ENCODE measurements at regions of chr11 and their contacts with region 1.

Region 1: GRCh38 chr11:9460322-9461067 is at the start of gene ZNF143:
- DNase-seq: peak; percentile 99 to 100 (median 100)
- ATAC-seq: peak; percentile 89
- H3K4me3 ChIP-seq: peak within 1 kb of the TSS; percentile 89 to 93
- H3K4me3 Mint-ChIP-seq: peak within 1 kb of the TSS; percentile 92
- H3K27ac ChIP-seq: peak within 1 kb of the TSS; percentile 98
- H3K27ac Mint-ChIP-seq: peak within 1 kb of the TSS; percentile 97
- H3K4me1 ChIP-seq: peaks cover 31% of the 10 kb centered on the region
- H3K4me1 Mint-ChIP-seq: peaks cover 33% of the 10 kb centered on the region
- H3K27me3 ChIP-seq: no peaks in the 10 kb centered on the region
- H3K27me3 Mint-ChIP-seq: no peaks in the 10 kb centered on the region
- CTCF ChIP-seq: no peak
- total RNA-seq, gene ZNF143: 13.4 to 15.4 TPM

Region 2: DNA sequence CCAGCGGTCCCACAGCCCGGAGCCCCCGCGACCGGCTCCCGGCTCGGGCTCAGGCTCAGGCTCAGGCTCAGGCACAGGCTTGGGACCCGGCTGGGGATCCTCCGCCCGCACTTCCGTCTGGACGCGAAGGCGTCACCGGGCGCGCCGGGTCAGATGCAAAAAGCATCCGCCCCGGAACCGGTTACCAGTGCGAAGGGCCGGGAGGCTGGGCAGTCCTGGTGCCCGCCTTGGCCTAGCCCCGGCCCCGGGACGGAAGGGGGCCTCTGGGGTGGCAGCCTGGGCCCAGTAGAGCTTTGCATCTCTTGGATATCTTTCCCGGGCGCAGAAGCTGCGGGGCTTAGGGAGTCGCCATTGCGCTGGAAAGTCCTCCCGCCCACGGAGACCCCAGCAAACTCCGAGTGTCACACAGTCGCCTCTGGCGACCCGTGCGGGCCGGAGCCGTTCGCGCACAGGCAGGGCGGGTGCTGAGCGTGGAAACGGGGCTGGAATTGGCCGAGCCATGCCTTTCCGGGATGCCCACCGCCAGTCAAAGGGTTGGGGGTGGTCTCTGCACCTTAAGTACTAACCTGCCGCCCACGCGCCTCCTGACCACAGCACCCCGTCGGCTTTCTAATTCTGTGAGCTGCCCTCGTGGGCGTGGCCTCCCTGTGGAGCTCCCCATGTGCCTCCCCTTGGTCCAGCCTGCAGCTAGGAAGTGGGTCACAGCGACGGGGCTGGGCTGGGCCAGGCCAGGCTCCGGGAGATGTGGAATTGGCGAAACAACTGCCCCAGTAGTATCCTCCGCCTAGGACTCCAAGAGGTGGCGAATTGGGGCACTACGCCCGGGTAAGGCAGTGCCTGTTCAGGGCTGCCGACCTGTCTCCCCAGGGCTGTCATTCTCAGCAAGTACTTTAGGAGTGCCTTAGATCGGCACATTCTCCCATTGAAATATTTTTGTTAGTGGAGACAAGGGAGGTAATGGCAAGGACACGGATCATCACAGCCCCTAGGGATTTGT is 495.9 kb before region 1 on chr11 and contains the start of gene TMEM9B:
- CTCF ChIA-PET with region 1: no interaction called
- POLR2A ChIA-PET with region 1: interaction called, 10 read pairs
- intact Hi-C with region 1: loop called in 1 of 2 experiments (anchors 1 kb)
- DNase-seq: peak; percentile 48 to 89 (median 75)
- ATAC-seq: peak; percentile 72
- H3K4me3 ChIP-seq: peak within 1 kb of the TSS; percentile 93 to 98
- H3K4me3 Mint-ChIP-seq: peak within 1 kb of the TSS; percentile 98
- H3K27ac ChIP-seq: peak within 1 kb of the TSS; percentile 94 to 99
- H3K27ac Mint-ChIP-seq: peak within 1 kb of the TSS; percentile 98
- H3K4me1 ChIP-seq: peaks cover 24% of the 10 kb centered on the region
- H3K4me1 Mint-ChIP-seq: peaks cover 36% of the 10 kb centered on the region
- H3K27me3 ChIP-seq: no peaks in the 10 kb centered on the region
- H3K27me3 Mint-ChIP-seq: no peaks in the 10 kb centered on the region
- CTCF ChIP-seq: no peak
- total RNA-seq, gene TMEM9B: 27.5 to 28.5 TPM

Region 3: GRCh38 chr11:9265211-9266131 is 195.0 kb before region 1 on chr11 and contains the start of gene DENND5A:
- CTCF ChIA-PET with region 1: no interaction called
- POLR2A ChIA-PET with region 1: interaction called, 14 read pairs
- intact Hi-C with region 1: no loop called
- DNase-seq: peak; percentile 12 to 74 (median 52)
- ATAC-seq: peak; percentile 44
- H3K4me3 ChIP-seq: peak within 1 kb of the TSS; percentile 71 to 79
- H3K4me3 Mint-ChIP-seq: peak within 1 kb of the TSS; percentile 98
- H3K27ac ChIP-seq: peak within 1 kb of the TSS; percentile 45 to 71
- H3K27ac Mint-ChIP-seq: peak within 1 kb of the TSS; percentile 97
- H3K4me1 ChIP-seq: peaks cover 23% of the 10 kb centered on the region
- H3K4me1 Mint-ChIP-seq: peaks cover 35% of the 10 kb centered on the region
- H3K27me3 ChIP-seq: no peaks in the 10 kb centered on the region
- H3K27me3 Mint-ChIP-seq: no peaks in the 10 kb centered on the region
- CTCF ChIP-seq: no peak
- total RNA-seq, gene DENND5A: 78.8 to 81.7 TPM

Region 4: DNA sequence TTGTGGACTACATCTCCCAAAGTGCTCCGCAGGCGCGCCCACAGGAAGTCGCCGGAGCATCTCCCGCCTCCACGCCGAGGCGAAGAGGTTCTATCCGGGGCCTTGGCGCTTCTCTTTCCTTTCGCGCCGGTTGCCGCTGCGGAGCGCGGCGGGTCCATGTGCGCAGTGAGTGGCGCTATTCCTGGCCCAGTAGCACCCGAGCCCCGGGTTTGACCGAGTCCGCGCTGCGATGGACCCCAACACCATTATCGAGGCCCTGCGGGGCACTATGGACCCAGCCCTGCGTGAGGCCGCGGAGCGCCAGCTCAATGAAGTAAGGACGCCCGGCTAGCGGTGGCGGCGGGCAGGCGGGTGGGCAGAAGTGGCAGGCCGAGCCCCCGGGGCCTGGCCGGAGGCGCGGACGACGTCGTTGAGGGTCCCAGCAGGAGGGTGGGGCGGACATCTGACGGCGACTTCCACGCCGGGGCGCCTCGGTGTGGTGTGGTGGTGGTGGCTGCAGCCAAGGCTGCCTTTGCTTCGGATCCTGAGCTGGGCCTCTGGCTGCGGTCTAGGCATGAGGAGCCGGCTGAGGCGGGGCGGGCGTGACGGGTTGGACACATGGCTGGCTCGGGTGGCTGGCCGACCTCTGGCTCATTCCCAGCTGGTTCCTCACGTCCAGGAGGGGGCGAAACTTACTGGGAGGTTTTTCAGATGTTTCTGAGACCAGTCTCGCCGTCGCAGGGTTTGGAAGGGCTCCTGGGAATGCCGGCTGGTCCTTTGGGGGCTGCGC is 75.8 kb before region 1 on chr11 and contains the start of gene IPO7:
- CTCF ChIA-PET with region 1: no interaction called
- POLR2A ChIA-PET with region 1: interaction called, 34 read pairs
- intact Hi-C with region 1: loop called (anchors 1 kb)
- DNase-seq: peak; percentile 73 to 92 (median 87)
- ATAC-seq: peak; percentile 98
- H3K4me3 ChIP-seq: peak within 1 kb of the TSS; percentile 79 to 83
- H3K4me3 Mint-ChIP-seq: peak within 1 kb of the TSS; percentile 96
- H3K27ac ChIP-seq: peak within 1 kb of the TSS; percentile 77 to 84
- H3K27ac Mint-ChIP-seq: peak within 1 kb of the TSS; percentile 92
- H3K4me1 ChIP-seq: peaks cover 12% of the 10 kb centered on the region
- H3K4me1 Mint-ChIP-seq: peaks cover 33% of the 10 kb centered on the region
- H3K27me3 ChIP-seq: no peaks in the 10 kb centered on the region
- H3K27me3 Mint-ChIP-seq: no peaks in the 10 kb centered on the region
- CTCF ChIP-seq: no peak
- total RNA-seq, gene IPO7: 52.4 to 53.4 TPM

Region 5: GRCh38 chr11:9506489-9507276 is 46.2 kb after region 1 on chr11:
- CTCF ChIA-PET with region 1: interaction called, 16 read pairs
- POLR2A ChIA-PET with region 1: interaction called, 3 read pairs
- intact Hi-C with region 1: no loop called
- DNase-seq: peak; percentile 44 to 84 (median 77)
- ATAC-seq: peak; percentile 84
- H3K4me3 ChIP-seq: no peak overlapping the region
- H3K4me3 Mint-ChIP-seq: no peak overlapping the region
- H3K27ac ChIP-seq: no peak overlapping the region
- H3K27ac Mint-ChIP-seq: no peak overlapping the region
- H3K4me1 ChIP-seq: no peaks in the 10 kb centered on the region
- H3K4me1 Mint-ChIP-seq: peaks cover 11% of the 10 kb centered on the region
- H3K27me3 ChIP-seq: no peaks in the 10 kb centered on the region
- H3K27me3 Mint-ChIP-seq: no peaks in the 10 kb centered on the region
- CTCF ChIP-seq: peak; percentile 84

Region 6: DNA sequence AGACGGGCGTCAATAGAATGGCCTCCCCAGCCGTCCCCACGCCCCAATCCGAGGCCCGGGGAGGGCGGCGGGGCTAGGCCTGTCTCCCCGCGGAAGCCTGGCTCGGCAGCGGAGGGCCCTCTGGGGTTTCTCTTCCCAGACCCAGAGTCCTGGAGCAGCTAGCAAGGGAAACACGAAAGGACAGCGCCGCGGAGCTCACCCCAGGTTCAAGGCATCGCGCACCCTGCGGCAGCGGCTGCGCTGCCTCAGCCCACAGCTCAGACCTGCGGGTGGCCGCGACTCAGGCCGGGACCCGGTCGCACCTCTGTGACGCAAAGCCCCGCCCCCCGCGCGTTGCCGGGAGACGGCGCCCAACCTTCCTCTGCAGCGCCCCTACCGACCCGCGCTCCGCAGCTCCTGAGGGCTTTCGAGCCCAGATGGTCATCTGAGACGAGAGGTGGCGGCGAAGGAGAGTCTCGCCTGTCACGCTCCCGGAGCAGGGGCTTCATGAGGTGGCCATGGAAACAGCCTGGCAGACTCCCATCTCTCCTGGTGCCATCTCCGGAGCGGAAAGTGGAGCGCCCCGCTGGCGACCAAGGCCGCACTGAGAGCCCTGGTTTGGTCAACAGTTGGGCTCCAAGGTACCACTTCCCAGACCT is 1080.5 kb after region 1 on chr11 and contains the start of gene RNF141:
- CTCF ChIA-PET with region 1: no interaction called
- POLR2A ChIA-PET with region 1: no interaction called
- intact Hi-C with region 1: loop called in 1 of 2 experiments (anchors 5 kb)
- DNase-seq: peak; percentile 89 to 98 (median 95)
- ATAC-seq: peak; percentile 98
- H3K4me3 ChIP-seq: peak within 1 kb of the TSS; percentile 78 to 83
- H3K4me3 Mint-ChIP-seq: peak within 1 kb of the TSS; percentile 91
- H3K27ac ChIP-seq: peak within 1 kb of the TSS; percentile 77 to 85
- H3K27ac Mint-ChIP-seq: peak within 1 kb of the TSS; percentile 89
- H3K4me1 ChIP-seq: peaks cover 13% of the 10 kb centered on the region
- H3K4me1 Mint-ChIP-seq: peaks cover 32% of the 10 kb centered on the region
- H3K27me3 ChIP-seq: no peaks in the 10 kb centered on the region
- H3K27me3 Mint-ChIP-seq: no peaks in the 10 kb centered on the region
- CTCF ChIP-seq: peak; percentile 85
- total RNA-seq, gene RNF141: 17.3 to 19.2 TPM